Ovary (tissue), 10 donors: ENCODE measurements at regions of chr1 and their contacts with region 1.

Region 1: DNA sequence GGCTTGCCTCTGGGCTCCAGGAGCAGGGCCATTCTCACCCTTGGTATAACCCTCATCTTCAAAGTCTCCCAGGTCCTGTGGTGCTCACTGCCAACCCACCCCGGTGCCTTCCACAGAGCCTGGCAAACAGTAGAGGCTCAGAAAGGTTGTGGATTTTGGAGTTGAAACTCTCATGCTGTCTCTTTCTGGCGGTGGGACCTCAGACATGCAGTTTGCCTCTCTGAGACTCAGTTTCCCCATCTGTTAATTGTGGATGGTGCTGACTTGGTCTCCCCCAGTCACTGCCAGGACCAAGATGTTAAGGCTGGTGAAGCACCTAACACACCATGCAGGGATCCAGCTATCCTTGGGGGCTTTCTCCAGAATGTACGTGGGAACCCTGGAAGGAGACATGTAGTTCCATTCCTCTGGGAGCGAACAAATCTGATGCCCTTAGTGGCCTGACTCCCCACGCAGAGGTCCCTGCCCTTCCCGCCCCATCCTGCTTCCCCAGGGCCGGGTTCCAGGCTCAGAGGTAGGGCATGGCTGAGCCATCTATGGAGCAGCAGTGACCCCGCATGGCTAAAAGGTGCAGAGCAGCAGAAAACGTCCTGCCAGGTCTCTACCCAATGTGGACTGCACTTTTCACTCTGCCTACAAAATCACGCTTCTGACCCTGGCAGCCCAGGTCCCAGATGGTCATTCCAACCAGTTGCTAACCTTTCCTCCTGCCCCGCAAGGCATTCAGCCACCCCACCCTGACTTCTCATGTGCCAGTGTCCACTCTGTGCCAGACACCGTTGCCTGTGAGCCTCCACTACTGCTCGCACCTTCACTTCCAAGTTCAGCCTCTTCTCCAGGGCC is 9.2 kb upstream of the TTC22 start:
- DNase-seq: peak; percentile 48 to 80 (median 64)
- H3K4me3 ChIP-seq: no peak overlapping the region
- H3K27ac ChIP-seq: no peak overlapping the region
- H3K4me1 ChIP-seq: no peaks in the 10 kb centered on the region
- H3K27me3 ChIP-seq: no peaks in the 10 kb centered on the region
- CTCF ChIP-seq: peak; percentile 39 to 84 (median 76)
- EP300 ChIP-seq: no peak
- POLR2A ChIP-seq: no peak

Region 2: GRCh38 chr1:53860967-53861411 is 949.3 kb before region 1 on chr1:
- intact Hi-C with region 1: loop called (anchors 5 to 10 kb)
- DNase-seq: peak in 3 of 5 donors; percentile 26 to 37 (median 35)
- H3K4me3 ChIP-seq: no peak overlapping the region
- H3K27ac ChIP-seq: no peak overlapping the region
- H3K4me1 ChIP-seq: no peaks in the 10 kb centered on the region
- H3K27me3 ChIP-seq: no peaks in the 10 kb centered on the region
- CTCF ChIP-seq: peak; percentile 44 to 53 (median 49)
- EP300 ChIP-seq: no peak
- POLR2A ChIP-seq: no peak

Region 3: DNA sequence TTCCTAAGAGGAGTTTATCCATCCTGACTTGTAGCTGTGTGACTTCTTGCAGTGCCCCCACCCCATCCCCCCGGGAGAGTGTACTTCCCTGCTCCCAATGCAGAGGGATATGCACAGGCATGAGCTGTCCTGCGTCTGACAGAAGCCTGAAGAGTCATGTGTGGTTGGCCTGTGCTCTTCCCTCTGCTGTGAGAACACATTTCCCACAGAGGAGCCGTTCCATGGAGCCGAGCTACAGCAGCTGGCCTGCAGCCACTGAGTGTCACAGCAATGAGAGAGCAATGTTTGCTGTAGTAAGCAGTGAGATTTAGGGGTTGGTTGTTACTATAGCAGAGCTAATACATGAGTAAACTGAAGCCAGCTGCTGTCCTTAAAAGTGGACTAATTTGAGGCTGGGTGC is 68.0 kb before region 1 on chr1:
- intact Hi-C with region 1: no loop called
- DNase-seq: no peak
- H3K4me3 ChIP-seq: no peak overlapping the region
- H3K27ac ChIP-seq: no peak overlapping the region
- H3K4me1 ChIP-seq: no peaks in the 10 kb centered on the region
- H3K27me3 ChIP-seq: no peaks in the 10 kb centered on the region
- CTCF ChIP-seq: no peak
- EP300 ChIP-seq: no peak
- POLR2A ChIP-seq: no peak

Region 4: DNA sequence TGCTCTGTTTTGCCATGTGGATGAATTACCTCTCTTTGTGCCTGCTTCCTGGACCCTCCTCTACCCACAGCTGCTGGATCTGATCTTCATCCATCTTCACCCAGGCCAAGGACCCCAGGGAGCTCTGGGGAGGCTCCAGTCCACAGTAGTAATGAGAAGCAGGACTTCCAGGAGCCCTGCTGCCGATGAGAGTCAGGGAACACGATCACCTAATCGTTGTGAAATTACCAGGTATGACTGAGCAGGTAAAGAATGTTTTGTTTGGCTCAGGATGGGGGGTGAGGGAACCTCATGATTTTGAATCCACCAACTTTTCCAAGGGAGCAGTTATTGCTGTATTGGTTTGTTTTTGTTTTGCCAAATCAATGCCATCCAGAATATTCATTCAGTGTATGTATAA is 1315.0 kb after region 1 on chr1:
- intact Hi-C with region 1: loop called in 1 of 4 experiments (anchors 5 kb)
- DNase-seq: no peak
- H3K4me3 ChIP-seq: no peak overlapping the region
- H3K27ac ChIP-seq: no peak overlapping the region
- H3K4me1 ChIP-seq: no peaks in the 10 kb centered on the region
- H3K27me3 ChIP-seq: no peaks in the 10 kb centered on the region
- CTCF ChIP-seq: no peak
- EP300 ChIP-seq: no peak
- POLR2A ChIP-seq: no peak